Endothelial cell of umbilical vein (primary cell): ENCODE measurements at regions of chr21 and their contacts with region 1.

Region 1: DNA sequence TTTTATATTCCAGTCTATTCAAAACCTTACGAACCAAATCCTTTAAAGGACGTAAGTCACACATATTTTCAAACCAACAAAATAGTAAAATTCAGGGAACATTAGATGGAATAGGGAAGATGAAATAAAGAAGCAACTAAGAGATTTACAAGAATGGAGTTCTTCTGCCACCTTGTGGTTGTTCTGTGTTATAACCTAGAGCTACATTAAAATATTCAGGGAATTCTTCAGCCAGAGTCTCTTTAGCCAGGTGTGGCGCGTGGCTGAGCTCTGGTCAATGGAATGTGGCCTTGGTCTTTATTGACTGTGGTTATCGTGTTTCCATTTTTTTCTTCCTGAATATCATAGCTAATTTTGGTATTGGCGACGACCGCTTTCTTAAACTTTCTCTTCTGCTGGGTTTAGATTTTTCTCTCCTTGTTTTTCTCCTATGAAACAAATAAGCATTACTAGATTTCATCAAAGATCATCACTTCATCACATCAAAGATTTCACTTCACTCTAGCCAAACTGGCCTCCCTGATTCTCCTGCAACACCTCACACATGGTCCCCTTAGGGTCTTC is 221.3 kb downstream of the MRPL39 start:
- DNase-seq: peak; percentile 50
- H3K4me3 ChIP-seq: no peak overlapping the region
- H3K27ac ChIP-seq: no peak overlapping the region
- H3K4me1 ChIP-seq: no peaks in the 10 kb centered on the region
- H3K27me3 ChIP-seq: peaks cover 0 to 1% of the 10 kb centered on the region in 2 experiments
- CTCF ChIP-seq: peak; percentile 45 to 53
- POLR2A ChIP-seq: no peak

Region 2: DNA sequence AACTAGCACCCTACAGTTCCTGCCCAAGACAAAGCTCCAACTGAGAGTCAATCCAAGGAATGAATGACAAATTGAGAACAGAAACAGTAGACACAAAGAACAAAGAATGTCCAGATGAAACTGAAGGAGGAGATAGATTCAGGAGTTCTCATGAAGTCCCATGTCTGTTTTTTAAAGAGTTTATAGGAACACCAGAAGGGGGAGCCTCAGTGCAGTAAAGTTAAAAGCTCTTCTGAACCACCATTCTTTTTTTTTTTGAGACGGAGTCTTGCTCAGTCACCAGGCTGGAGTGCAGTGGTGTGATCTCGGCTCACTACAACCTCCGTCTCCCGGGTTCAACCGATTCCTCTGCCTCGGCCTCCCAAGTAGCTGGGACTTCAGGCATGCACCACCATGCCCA is 102.3 kb before region 1 on chr21:
- CTCF ChIA-PET with region 1: interaction called, 39 read pairs
- POLR2A ChIA-PET with region 1: no interaction called
- dilution Hi-C with region 1: no loop called
- intact Hi-C with region 1: loop called (anchors 1 kb)
- DNase-seq: peak; percentile 5
- H3K4me3 ChIP-seq: no peak overlapping the region
- H3K27ac ChIP-seq: no peak overlapping the region
- H3K4me1 ChIP-seq: no peaks in the 10 kb centered on the region
- H3K27me3 ChIP-seq: no peaks in the 10 kb centered on the region
- CTCF ChIP-seq: no peak
- POLR2A ChIP-seq: no peak

Region 3: DNA sequence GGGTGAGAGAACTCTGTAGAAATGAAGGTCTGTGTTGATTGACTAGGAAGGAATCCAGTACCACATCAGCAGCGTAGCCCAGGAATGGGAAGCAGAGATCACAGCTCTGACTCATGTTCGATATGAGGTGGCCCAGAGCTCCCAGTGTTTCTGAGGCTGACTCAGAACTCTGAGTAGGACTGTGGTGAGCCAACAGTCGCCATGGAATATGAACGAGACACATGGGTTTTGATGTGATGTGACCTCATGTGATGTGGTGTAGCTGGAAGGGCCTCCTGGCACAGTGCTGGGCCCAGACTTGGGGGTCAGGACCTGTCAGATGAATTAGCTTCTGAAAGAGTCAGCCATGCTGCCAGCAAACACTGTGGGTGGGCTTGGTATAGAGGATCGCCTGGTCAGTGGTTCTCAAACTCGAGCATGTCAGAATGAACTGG is 15.7 kb before region 1 on chr21:
- CTCF ChIA-PET with region 1: interaction called, 17 read pairs
- POLR2A ChIA-PET with region 1: no interaction called
- dilution Hi-C with region 1: no loop called
- intact Hi-C with region 1: no loop called
- DNase-seq: peak; percentile 75
- H3K4me3 ChIP-seq: no peak overlapping the region
- H3K27ac ChIP-seq: peak overlapping the region; percentile 45
- H3K4me1 ChIP-seq: no peaks in the 10 kb centered on the region
- H3K27me3 ChIP-seq: no peaks in the 10 kb centered on the region
- CTCF ChIP-seq: no peak
- POLR2A ChIP-seq: no peak

Region 4: GRCh38 chr21:25573409-25574206 is 187.6 kb after region 1 on chr21:
- CTCF ChIA-PET with region 1: no interaction called
- POLR2A ChIA-PET with region 1: no interaction called
- dilution Hi-C with region 1: no loop called
- intact Hi-C with region 1: no loop called
- DNase-seq: peak; percentile 86
- H3K4me3 ChIP-seq: peak overlapping the region in 1 of 3 experiments; percentile 34
- H3K27ac ChIP-seq: peak overlapping the region; percentile 80
- H3K4me1 ChIP-seq: peaks cover 27% of the 10 kb centered on the region
- H3K27me3 ChIP-seq: no peaks in the 10 kb centered on the region
- CTCF ChIP-seq: no peak
- POLR2A ChIP-seq: no peak